ENCODE measurements at regions of chr6 and their contacts with region 1.

Region 1: DNA sequence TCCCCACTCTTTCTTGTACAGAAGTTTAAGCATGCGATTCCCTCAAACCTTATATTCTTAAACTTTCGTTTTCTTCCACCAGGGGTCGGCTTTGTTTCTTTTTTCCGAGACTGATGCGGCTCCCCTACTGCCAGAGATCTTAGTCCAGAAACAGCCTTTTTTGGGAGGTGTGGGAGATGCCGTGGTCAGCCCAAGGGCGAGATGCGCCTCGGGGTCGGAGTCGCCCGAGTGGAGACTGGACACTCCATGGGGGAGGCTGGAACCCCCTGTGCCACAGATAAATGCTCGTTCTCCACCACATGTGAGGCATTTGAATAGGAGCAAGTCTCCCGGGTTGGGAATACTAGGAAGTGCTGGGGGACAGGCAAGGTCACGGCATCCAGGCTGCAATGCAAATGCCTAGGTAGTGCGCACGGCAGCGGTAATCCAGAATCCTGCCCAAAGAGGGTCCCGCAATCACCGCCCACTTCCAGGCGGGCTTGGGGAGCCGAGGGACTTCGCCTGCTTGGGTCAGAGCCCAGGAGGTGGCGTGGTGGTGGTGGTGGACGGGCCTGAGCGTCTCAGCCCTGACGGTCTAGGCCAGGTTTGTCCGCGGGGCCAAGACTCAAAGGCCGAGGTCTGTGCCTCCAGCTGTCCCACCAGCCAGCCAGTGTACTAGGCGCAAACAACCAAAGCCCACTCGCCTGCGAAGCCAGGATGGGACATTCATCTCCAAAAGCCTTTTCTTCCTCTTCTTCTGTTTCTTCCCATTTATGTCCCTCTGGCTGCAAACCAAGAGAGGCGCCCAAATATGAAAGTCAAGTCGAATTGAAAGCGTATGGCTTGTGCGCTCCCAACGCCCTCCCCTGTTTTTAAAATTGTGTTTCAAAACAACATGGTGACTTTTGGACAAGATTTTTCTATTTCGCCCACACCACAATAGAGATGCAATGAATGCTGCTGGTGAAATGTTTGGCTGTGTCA is 39.3 kb upstream of the OSTM1 start:
- DNase-seq: peak; percentile 21
- H3K4me3 Mint-ChIP-seq: peak overlapping the region; percentile 46
- H3K27ac Mint-ChIP-seq: no peak overlapping the region
- H3K4me1 Mint-ChIP-seq: peaks cover 43% of the 10 kb centered on the region
- H3K27me3 Mint-ChIP-seq: peaks cover 71% of the 10 kb centered on the region

Region 2: DNA sequence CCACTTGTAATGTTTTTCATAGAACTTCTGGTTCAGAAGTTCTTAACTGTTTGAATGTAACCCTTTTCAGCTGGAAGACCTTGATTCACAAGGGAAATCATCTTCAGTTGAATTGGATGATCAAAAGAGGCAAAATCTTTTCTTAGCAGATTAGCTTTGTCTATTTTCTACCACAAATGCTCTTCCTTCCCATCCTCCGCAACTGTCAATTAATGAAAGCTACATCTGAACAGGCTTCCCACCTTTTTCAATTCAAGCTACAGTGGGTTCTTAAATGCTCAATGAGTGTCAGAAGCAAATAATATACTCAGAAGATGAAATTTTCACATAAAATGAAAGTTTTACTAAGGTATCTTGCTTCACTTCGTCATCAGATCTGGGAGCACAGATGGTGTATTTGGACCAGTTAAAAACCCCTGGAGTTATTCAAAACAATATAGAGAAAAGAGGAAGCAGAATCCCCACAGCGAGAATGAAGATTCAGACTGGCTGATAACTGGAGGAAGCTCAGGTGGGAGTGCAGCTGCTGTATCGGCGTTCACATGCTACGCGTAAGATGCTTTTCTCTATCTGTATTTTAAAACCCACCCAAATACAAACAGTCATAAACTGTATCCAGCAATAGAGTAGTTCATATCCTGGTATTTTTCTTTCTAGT is 1465.1 kb before region 1 on chr6:
- CTCF ChIA-PET with region 1: no interaction called
- POLR2A ChIA-PET with region 1: no interaction called
- intact Hi-C with region 1: no loop called
- DNase-seq: no peak
- H3K4me3 Mint-ChIP-seq: no peak overlapping the region
- H3K27ac Mint-ChIP-seq: no peak overlapping the region
- H3K4me1 Mint-ChIP-seq: no peaks in the 10 kb centered on the region
- H3K27me3 Mint-ChIP-seq: no peaks in the 10 kb centered on the region

Region 3: GRCh38 chr6:108074359-108075144 is 39.3 kb before region 1 on chr6 and contains the start of gene OSTM1:
- CTCF ChIA-PET with region 1: no interaction called
- POLR2A ChIA-PET with region 1: no interaction called
- intact Hi-C with region 1: loop called (anchors 2 kb)
- DNase-seq: peak; percentile 95
- H3K4me3 Mint-ChIP-seq: peak within 1 kb of the TSS; percentile 80
- H3K27ac Mint-ChIP-seq: peak within 1 kb of the TSS; percentile 65
- H3K4me1 Mint-ChIP-seq: peaks cover 24% of the 10 kb centered on the region
- H3K27me3 Mint-ChIP-seq: no peaks in the 10 kb centered on the region
- total RNA-seq, gene OSTM1: 14.0 to 16.3 TPM

Region 4: DNA sequence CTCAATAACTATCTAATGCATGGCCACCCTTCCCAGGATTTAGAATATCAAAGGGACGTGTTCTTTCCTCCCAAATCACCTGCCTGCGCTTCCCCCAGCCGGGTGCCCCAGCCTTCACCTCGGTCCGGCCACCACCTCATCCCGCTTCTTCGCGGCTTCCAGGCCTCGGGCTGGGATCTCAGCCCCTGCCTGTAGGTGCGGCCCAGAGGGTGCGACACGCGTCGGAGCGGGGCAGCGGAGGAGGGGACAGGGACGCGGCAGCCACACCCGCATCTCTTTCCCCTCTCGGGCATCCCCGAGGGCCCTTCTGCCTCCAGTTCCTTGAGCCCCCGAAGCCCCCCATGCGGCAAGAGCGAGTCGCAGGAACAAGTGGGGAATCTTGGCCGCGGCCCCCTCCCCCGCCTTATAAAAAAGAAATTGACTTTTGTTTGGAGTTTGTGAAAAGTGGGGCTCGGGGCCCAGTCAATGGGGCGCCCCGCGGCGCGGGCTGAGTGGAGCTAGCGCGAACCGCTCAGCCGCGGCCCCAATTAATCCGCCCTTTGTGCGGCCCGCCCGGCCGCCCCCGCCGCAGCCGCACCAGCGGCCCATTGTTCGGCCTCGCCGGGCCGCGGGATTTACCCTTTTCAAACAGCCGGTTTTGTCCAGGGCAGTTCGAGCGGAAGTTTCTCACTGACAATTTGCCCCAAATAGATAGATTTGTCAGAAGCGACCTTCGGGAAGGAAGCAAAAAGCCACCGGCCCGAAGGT is 43.6 kb after region 1 on chr6:
- CTCF ChIA-PET with region 1: no interaction called
- POLR2A ChIA-PET with region 1: no interaction called
- intact Hi-C with region 1: loop called (anchors 2 kb)
- DNase-seq: no peak
- H3K4me3 Mint-ChIP-seq: peak overlapping the region; percentile 3
- H3K27ac Mint-ChIP-seq: no peak overlapping the region
- H3K4me1 Mint-ChIP-seq: peaks cover 11% of the 10 kb centered on the region
- H3K27me3 Mint-ChIP-seq: peaks cover 77% of the 10 kb centered on the region

Region 5: GRCh38 chr6:108243836-108244235 is 130.0 kb after region 1 on chr6:
- CTCF ChIA-PET with region 1: no interaction called
- POLR2A ChIA-PET with region 1: no interaction called
- intact Hi-C with region 1: no loop called
- DNase-seq: no peak
- H3K4me3 Mint-ChIP-seq: no peak overlapping the region
- H3K27ac Mint-ChIP-seq: no peak overlapping the region
- H3K4me1 Mint-ChIP-seq: peaks cover 18% of the 10 kb centered on the region
- H3K27me3 Mint-ChIP-seq: no peaks in the 10 kb centered on the region

Region 6: DNA sequence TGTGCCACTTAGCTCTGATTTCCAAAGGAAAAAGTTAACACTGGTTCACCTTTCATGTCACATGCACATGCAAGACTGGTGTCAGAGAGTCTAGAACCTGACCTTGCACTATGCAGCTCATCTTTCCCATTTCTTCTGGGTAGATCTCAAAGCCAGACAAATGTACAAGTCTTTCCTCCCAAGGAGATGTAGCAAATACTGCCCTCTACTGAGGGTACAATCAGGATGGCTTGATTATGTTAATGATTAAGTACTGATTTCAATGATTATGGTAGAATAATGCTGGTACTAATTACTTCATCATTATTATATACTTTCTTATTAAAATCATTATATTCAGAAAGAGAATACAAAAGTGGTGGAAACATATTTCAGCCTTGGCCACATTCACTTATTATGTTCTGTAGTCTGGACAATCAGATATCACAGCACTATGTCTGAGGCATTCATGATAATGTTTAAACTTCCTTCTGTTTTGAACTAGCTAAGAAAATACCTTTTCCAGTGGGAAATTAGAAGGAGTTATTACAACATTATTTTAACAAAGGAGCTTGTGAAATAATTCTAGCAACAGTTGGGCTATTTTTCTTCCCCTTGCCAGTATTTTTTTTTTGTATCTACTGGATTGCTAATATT is 378.4 kb after region 1 on chr6:
- CTCF ChIA-PET with region 1: interaction called, 33 read pairs
- POLR2A ChIA-PET with region 1: no interaction called
- intact Hi-C with region 1: loop called (anchors 1 kb)
- DNase-seq: no peak
- H3K4me3 Mint-ChIP-seq: no peak overlapping the region
- H3K27ac Mint-ChIP-seq: no peak overlapping the region
- H3K4me1 Mint-ChIP-seq: no peaks in the 10 kb centered on the region
- H3K27me3 Mint-ChIP-seq: no peaks in the 10 kb centered on the region

Region 7: GRCh38 chr6:109095027-109095834 is 981.4 kb after region 1 on chr6 and contains the start of gene CEP57L1:
- CTCF ChIA-PET with region 1: no interaction called
- POLR2A ChIA-PET with region 1: no interaction called
- intact Hi-C with region 1: no loop called
- DNase-seq: peak; percentile 97
- H3K4me3 Mint-ChIP-seq: peak within 1 kb of the TSS; percentile 96
- H3K27ac Mint-ChIP-seq: peak within 1 kb of the TSS; percentile 100
- H3K4me1 Mint-ChIP-seq: peaks cover 44% of the 10 kb centered on the region
- H3K27me3 Mint-ChIP-seq: no peaks in the 10 kb centered on the region
- total RNA-seq, gene CEP57L1: 23.0 to 27.8 TPM